ENCODE measurements at regions of chr12 and their contacts with region 1.

Region 1: GRCh38 chr12:123085730-123086487 is 65.0 kb downstream of the PITPNM2 start:
- DNase-seq: no peak
- ATAC-seq: no peak
- H3K4me3 ChIP-seq: no peak overlapping the region
- H3K4me3 Mint-ChIP-seq: peak overlapping the region; percentile 10
- H3K27ac ChIP-seq: no peak overlapping the region
- H3K27ac Mint-ChIP-seq: peak overlapping the region; percentile 6
- H3K4me1 ChIP-seq: peaks cover 59 to 86% of the 10 kb centered on the region in 2 donors
- H3K4me1 Mint-ChIP-seq: peaks cover 70% of the 10 kb centered on the region
- H3K27me3 ChIP-seq: no peaks in the 10 kb centered on the region
- H3K27me3 Mint-ChIP-seq: no peaks in the 10 kb centered on the region
- CTCF ChIP-seq: no peak

Region 2: DNA sequence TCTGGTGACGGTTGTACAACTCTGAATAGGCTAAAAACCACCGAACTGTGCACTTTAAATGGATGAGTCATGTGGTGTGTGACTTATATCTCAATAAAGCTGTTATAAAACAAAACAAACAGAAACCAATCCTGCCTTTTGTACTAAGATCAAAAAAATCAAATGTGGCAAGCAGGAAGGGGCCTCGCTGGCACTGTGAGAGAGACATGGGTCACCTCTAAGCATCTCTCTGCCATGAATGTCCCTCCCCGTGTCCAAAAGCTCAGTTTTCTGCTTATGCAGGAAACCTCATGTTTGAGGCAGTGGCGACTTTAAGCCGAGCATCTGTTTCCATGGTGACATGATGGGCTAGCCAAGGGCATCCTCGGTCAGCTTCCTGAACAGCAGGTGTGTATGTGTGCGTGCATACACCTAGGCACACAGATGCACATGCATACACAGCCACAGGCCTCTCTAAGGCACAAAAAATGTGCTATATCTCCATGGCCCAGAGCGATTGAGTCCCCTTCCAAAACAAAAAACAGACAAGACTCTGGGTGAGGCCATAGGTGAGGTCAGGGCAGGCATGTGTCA is 61.0 kb before region 1 on chr12:
- CTCF ChIA-PET with region 1: no interaction called
- POLR2A ChIA-PET with region 1: no interaction called
- intact Hi-C with region 1: no loop called
- DNase-seq: no peak
- ATAC-seq: no peak
- H3K4me3 ChIP-seq: no peak overlapping the region
- H3K4me3 Mint-ChIP-seq: no peak overlapping the region
- H3K27ac ChIP-seq: no peak overlapping the region
- H3K27ac Mint-ChIP-seq: no peak overlapping the region
- H3K4me1 ChIP-seq: no peaks in the 10 kb centered on the region
- H3K4me1 Mint-ChIP-seq: no peaks in the 10 kb centered on the region
- H3K27me3 ChIP-seq: no peaks in the 10 kb centered on the region
- H3K27me3 Mint-ChIP-seq: no peaks in the 10 kb centered on the region
- CTCF ChIP-seq: no peak

Region 3: DNA sequence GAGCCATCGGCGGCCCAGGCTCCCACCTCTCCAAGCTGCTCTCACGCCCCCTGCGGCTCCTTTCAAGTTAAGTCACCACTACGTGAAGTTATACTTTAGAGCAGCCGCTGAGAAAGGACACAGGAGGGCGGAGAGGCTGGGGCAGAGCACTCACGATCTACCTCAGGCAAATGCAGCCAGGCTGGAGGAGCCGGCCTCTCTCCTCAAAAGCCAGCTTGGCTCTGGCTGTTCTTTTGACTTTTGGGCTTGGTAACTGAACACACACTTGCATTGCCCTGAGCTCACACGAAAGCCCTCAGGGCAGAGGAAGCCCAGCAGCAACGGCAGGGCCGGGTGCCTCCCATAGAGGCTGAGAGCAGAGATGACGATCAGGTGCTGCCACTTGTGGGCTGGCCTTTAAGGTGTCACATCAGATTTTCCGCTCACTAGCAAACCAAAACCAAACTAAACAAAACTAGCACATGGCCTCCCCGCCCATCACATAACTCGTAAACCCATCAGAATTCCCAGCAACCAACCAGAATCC is 10.2 kb before region 1 on chr12:
- CTCF ChIA-PET with region 1: interaction called, 4 read pairs
- POLR2A ChIA-PET with region 1: no interaction called
- intact Hi-C with region 1: loop called (anchors 2 kb)
- DNase-seq: peak; percentile 53
- ATAC-seq: peak; percentile 86
- H3K4me3 ChIP-seq: peak overlapping the region in 1 of 5 experiments; percentile 6
- H3K4me3 Mint-ChIP-seq: peak overlapping the region; percentile 74
- H3K27ac ChIP-seq: peak overlapping the region; percentile 41 to 63
- H3K27ac Mint-ChIP-seq: peak overlapping the region; percentile 86
- H3K4me1 ChIP-seq: peaks cover 16 to 34% of the 10 kb centered on the region in 2 donors
- H3K4me1 Mint-ChIP-seq: peaks cover 34% of the 10 kb centered on the region
- H3K27me3 ChIP-seq: peaks cover 0 to 3% (median 0%) of the 10 kb centered on the region in 4 experiments
- H3K27me3 Mint-ChIP-seq: no peaks in the 10 kb centered on the region
- CTCF ChIP-seq: no peak

Region 4: GRCh38 chr12:123115409-123116121 is 29.7 kb after region 1 on chr12:
- CTCF ChIA-PET with region 1: interaction called, 7 read pairs
- POLR2A ChIA-PET with region 1: interaction called, 3 read pairs
- intact Hi-C with region 1: loop called (anchors 2 kb)
- DNase-seq: peak; percentile 89
- ATAC-seq: peak; percentile 66
- H3K4me3 ChIP-seq: peak overlapping the region in 2 of 5 experiments; percentile 12 to 31
- H3K4me3 Mint-ChIP-seq: peak overlapping the region; percentile 67
- H3K27ac ChIP-seq: peak overlapping the region; percentile 72 to 85
- H3K27ac Mint-ChIP-seq: peak overlapping the region; percentile 89
- H3K4me1 ChIP-seq: peaks cover 54 to 62% of the 10 kb centered on the region in 2 donors
- H3K4me1 Mint-ChIP-seq: peaks cover 61% of the 10 kb centered on the region
- H3K27me3 ChIP-seq: no peaks in the 10 kb centered on the region
- H3K27me3 Mint-ChIP-seq: no peaks in the 10 kb centered on the region
- CTCF ChIP-seq: no peak